ENCODE measurements at regions of chr19 and their contacts with region 1.

Region 1: DNA sequence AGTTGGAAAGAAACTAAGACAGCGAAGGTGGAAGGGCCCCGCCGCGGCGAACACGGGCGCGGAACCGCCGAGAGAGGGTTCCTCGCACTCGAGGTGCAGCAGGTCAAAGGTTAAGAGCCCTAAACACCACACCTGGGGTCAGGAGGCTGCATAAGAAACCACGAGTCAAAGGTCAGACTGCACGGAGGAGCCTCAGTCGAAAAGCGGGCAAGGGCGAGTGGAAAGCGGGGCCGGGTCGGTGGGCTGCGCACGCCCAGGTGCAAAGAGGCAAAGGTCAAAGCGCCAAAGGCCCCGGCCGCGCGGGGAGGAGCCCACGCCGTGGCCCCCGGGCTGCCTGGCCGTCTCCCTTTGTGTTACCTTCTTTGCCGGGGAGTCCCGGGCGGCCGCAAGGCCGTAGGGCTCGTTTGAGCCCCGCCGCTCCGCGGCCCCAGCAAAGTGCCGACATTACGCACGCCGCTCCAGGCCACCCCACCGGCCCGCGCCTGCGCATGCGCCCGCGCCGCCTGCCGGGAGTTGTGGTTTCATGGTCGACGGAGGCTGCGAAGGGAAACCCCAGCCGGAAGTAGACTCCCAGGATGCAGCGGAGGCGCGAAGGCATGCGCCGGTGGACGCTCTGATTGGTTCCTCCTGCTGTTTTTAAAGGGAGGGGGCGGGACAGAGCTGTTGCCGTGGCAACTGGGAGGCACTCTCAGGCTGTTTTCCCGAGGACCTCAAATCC is at the start of gene POLRMT:
- DNase-seq: peak; percentile 99 to 100
- H3K4me3 ChIP-seq: peak within 1 kb of the TSS; percentile 71 to 97 (median 82)
- H3K27ac ChIP-seq: peak within 1 kb of the TSS; percentile 44 to 88 (median 73)
- H3K4me1 ChIP-seq: peaks cover 20 to 54% (median 36%) of the 10 kb centered on the region in 4 donors
- H3K27me3 ChIP-seq: peaks cover 0 to under 1% (median 0%) of the 10 kb centered on the region in 3 donors
- CTCF ChIP-seq: peak in 1 of 7 experiments; percentile 22
- EP300 ChIP-seq: no peak
- POLR2A ChIP-seq: no peak
- total RNA-seq, gene POLRMT: 18.5 to 196 (median 57.8) TPM

Region 2: DNA sequence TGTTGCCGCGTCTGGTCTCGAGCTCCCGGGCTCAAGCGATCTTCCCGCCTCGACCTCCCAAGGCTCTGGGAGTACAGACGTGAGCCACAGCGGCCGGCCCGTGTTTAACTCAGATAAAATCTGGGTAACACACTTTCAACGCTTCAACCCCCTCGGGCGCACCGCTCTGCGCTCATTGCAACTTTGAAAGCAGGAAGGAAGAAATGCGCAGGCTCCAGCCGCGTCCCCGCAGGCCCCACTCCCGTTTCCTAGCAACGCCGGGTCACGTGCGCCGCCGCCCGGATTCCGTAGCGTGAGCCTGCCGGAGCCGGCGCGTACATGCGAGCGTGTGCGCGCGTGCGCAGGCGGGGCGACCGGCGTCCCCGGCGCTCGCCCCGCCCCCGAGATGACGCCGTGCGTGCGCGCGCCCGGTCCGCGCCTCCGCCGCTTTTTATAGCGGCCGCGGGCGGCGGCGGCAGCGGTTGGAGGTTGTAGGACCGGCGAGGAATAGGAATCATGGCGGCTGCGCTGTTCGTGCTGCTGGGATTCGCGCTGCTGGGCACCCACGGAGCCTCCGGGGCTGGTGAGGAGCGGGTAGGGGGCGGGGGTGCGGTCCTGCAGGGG is 61.0 kb before region 1 on chr19 and contains the start of gene BSG:
- intact Hi-C with region 1: loop called (anchors 10 kb)
- DNase-seq: peak; percentile 99
- H3K4me3 ChIP-seq: peak within 1 kb of the TSS; percentile 92 to 99 (median 96)
- H3K27ac ChIP-seq: peak within 1 kb of the TSS; percentile 93 to 97 (median 94)
- H3K4me1 ChIP-seq: peaks cover 39 to 58% (median 55%) of the 10 kb centered on the region in 4 donors
- H3K27me3 ChIP-seq: no peaks in the 10 kb centered on the region
- CTCF ChIP-seq: no peak
- EP300 ChIP-seq: no peak
- POLR2A ChIP-seq: peak in 2 of 4 donors; percentile 77 to 90
- total RNA-seq, gene BSG: 184 to 1,029 (median 269) TPM

Measured in stomach (tissue), 19 donors.